A673 (cell line): ENCODE measurements at regions of chr16 and their contacts with region 1.

Region 1: DNA sequence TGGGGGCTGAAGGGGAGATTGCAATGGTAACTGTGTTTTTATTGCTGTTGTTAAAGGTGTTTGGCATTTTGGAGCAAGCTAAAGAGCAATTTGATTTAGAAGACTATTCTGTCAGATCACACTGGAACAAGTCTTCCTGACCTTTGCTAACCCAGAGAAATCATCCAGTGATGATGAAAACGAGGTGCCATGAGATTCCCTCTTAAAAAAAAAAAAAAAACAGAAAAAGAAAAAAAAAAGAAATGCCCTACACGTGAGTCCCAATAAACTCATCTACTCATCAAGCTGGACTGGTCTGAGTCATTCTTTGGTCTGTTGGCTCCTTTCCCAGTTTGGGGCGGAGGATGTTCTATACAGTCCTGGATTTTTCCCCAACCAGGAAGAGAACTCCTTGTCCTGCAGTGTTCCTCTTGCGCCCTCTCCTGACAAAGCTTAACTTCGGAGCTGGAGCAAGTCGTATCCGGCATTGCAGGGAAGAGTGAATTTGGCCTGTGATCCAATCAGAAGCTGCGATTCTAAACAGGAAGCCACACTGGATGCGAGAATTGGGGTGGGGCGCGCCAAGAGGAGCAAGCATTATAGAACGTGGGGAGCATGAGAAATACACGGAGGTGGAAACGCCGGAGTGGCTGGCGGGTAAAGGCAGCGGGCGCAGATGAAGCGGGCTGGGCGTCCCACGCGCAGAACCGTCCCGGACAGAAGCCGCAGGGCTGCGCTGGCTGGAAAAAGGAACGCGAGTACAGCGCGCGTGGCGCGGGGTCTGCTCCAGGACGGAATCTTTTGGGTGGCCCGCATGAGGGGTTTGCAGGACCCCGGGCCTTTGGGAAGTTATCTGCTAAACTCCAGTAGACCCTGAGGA is 22.4 kb upstream of the CRYM start:
- DNase-seq: peak; percentile 99
- H3K4me3 ChIP-seq: peak overlapping the region; percentile 55
- H3K27ac ChIP-seq: no peak overlapping the region
- H3K4me1 ChIP-seq: peaks cover 3% of the 10 kb centered on the region
- H3K27me3 ChIP-seq: peaks cover 19% of the 10 kb centered on the region
- CTCF ChIP-seq: peak; percentile 95

Region 2: GRCh38 chr16:20849587-20850390 is 450.7 kb before region 1 on chr16:
- CTCF ChIA-PET with region 1: interaction called, 7 read pairs
- POLR2A ChIA-PET with region 1: no interaction called
- intact Hi-C with region 1: loop called (anchors 1 kb)
- DNase-seq: peak; percentile 73
- H3K4me3 ChIP-seq: no peak overlapping the region
- H3K27ac ChIP-seq: no peak overlapping the region
- H3K4me1 ChIP-seq: no peaks in the 10 kb centered on the region
- H3K27me3 ChIP-seq: no peaks in the 10 kb centered on the region
- CTCF ChIP-seq: peak; percentile 96

Region 3: DNA sequence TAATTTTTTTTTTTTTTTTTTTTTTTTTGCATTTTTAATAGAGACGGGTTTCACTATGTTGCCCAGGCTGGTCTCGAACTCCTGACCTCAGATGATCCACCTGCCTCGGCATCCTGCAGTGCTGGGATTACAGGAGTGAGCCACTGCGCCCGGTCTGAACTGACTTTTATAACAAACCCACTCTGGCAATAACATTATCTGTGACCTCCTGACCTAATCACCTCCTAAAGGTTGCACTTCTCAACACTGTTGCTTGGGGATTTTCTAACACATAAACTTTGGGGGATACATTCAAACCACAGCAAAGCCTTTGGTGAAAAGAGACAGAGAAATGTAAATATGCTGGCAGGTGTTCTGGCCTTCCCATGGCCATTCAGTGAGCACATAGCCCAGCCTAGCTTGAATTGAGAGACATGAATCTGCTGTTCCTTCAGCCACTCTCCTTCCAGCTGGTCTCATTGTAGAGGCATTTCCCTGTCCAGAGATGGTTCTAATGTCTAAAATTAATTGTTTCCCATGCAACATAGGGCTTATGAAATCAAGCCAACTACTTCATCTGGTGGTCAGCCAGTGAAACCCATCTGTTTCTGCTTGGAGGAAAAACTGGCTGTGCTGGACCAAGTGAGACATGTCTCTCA is 371.6 kb before region 1 on chr16:
- CTCF ChIA-PET with region 1: interaction called, 10 read pairs
- POLR2A ChIA-PET with region 1: no interaction called
- intact Hi-C with region 1: no loop called
- DNase-seq: no peak
- H3K4me3 ChIP-seq: no peak overlapping the region
- H3K27ac ChIP-seq: no peak overlapping the region
- H3K4me1 ChIP-seq: no peaks in the 10 kb centered on the region
- H3K27me3 ChIP-seq: no peaks in the 10 kb centered on the region
- CTCF ChIP-seq: no peak

Region 4: DNA sequence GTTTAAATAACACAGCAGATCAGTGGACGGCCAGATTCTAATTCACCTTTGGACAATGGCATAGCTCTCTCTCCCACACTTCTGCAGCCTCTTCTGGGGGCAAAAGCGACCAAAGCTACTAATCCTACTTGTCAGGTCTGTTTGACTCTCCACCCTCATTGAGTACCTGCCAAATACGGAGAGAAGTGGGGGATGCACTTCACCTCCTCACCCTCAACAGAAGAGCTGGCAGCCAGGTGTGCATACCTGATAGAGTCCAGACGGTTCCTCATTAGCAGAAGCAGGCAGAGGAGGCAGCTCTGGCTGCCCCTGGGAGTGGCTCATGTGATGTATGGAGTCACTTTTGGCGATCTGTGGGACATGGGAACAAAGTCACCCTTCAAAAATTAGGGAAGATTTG is 154.8 kb before region 1 on chr16:
- CTCF ChIA-PET with region 1: no interaction called
- POLR2A ChIA-PET with region 1: no interaction called
- intact Hi-C with region 1: no loop called
- DNase-seq: no peak
- H3K4me3 ChIP-seq: no peak overlapping the region
- H3K27ac ChIP-seq: no peak overlapping the region
- H3K4me1 ChIP-seq: no peaks in the 10 kb centered on the region
- H3K27me3 ChIP-seq: no peaks in the 10 kb centered on the region
- CTCF ChIP-seq: no peak

Region 5: DNA sequence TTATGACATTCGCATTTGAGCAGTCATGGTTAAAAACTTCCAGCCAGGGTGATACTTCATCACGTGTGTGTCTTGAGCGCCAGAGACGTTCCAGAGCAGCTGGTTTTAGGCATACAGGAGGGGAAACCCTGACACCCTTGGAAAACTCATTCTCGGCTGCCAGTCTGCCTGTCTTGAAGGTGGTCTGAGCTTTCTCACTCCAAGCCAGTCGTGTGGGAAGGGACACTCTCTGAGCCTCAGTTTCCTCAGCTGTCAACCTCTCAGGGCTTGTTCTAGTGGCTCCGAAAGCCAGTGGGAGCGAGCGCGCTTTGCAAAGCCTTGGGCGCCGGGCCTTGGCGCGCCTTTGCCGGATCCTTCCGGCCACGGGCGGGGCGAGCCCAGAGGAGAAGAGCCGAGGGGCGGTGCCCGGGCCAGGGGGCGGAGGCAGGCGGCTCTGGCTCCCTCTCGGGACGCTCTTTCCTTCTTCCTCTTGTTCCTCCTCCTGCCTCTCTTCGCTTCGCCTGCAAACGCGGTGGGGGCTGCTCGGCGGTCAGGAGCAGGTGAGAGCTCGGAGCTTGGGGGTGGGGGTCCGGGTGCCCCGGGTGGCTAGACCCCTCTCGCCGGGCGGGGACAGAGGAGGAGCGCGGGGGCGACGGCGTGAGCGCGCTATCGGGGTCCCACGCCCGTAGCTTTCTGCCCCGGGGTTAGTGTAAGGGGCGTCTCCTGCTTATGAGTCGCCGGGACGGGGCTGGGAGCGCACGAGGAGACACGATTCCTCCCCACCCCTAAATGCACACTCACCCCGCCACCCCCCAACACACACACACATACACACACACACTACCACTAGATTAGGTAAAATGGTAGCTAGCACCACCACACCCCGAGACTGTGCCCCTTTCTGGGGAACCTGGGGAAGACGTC is 142.1 kb before region 1 on chr16 and contains the start of gene LDAF1:
- CTCF ChIA-PET with region 1: interaction called, 27 read pairs
- POLR2A ChIA-PET with region 1: interaction called, 3 read pairs
- intact Hi-C with region 1: loop called (anchors 2 kb)
- DNase-seq: peak; percentile 88
- H3K4me3 ChIP-seq: peak within 1 kb of the TSS; percentile 67
- H3K27ac ChIP-seq: peak within 1 kb of the TSS; percentile 36
- H3K4me1 ChIP-seq: peaks cover 19% of the 10 kb centered on the region
- H3K27me3 ChIP-seq: no peaks in the 10 kb centered on the region
- CTCF ChIP-seq: no peak
- total RNA-seq, gene LDAF1: 5.9 and 7.0 TPM in 2 replicates

Region 6: DNA sequence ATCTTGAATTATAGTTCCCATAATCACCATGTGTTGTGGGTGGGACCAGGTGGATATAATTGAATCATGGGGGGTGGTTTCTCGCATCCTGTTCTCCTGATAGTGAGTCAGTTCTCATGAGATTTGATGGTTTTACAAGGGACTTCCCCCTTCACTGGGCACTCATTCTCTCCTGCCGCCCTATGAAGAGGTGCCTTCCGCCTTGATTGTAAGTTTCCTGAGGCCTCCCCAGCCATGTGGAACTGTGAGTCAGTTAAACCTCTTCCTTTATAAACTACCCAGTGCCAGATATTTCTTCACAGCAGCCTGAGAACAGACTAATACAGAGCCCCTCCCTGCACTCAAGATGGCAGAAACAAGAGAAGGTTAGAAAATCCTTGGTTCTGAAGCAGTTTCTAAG is 115.7 kb before region 1 on chr16:
- CTCF ChIA-PET with region 1: interaction called, 40 read pairs
- POLR2A ChIA-PET with region 1: no interaction called
- intact Hi-C with region 1: loop called (anchors 1 kb)
- DNase-seq: no peak
- H3K4me3 ChIP-seq: no peak overlapping the region
- H3K27ac ChIP-seq: no peak overlapping the region
- H3K4me1 ChIP-seq: no peaks in the 10 kb centered on the region
- H3K27me3 ChIP-seq: no peaks in the 10 kb centered on the region
- CTCF ChIP-seq: no peak

Region 7: GRCh38 chr16:21554795-21555585 is 254.5 kb after region 1 on chr16:
- CTCF ChIA-PET with region 1: no interaction called
- POLR2A ChIA-PET with region 1: no interaction called
- intact Hi-C with region 1: loop called (anchors 5 kb)
- DNase-seq: peak; percentile 93
- H3K4me3 ChIP-seq: no peak overlapping the region
- H3K27ac ChIP-seq: no peak overlapping the region
- H3K4me1 ChIP-seq: no peaks in the 10 kb centered on the region
- H3K27me3 ChIP-seq: peaks cover 7% of the 10 kb centered on the region
- CTCF ChIP-seq: peak; percentile 99

Region 8: DNA sequence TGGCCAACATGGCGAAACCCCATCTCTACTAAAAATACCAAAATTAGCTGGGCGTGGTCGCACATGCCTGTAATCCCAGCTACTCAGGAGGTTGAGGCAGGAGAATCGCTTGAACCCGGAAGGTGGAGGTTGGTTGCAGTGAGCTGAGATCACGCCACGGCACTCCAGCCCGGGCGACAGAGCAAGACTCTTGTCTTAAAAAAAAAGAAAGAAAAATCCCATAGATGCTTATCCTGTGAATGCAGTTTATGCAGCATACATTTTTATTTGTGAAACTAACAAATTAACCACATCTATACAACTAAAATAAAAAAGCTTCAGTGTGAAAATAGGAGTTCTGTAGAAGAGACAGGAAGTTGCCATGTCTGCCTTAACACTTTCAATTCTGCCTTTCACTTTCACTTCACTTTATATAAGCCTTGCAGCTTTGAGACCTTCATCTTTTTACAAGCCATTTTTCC is 344.8 kb after region 1 on chr16:
- CTCF ChIA-PET with region 1: no interaction called
- POLR2A ChIA-PET with region 1: no interaction called
- intact Hi-C with region 1: loop called (anchors 5 kb)
- DNase-seq: no peak
- H3K4me3 ChIP-seq: no peak overlapping the region
- H3K27ac ChIP-seq: peak overlapping the region; percentile 35
- H3K4me1 ChIP-seq: peaks cover 9% of the 10 kb centered on the region
- H3K27me3 ChIP-seq: no peaks in the 10 kb centered on the region
- CTCF ChIP-seq: no peak